Lower leg skin (tissue), 4 donors: ENCODE measurements at regions of chrX and their contacts with region 1.

Region 1: DNA sequence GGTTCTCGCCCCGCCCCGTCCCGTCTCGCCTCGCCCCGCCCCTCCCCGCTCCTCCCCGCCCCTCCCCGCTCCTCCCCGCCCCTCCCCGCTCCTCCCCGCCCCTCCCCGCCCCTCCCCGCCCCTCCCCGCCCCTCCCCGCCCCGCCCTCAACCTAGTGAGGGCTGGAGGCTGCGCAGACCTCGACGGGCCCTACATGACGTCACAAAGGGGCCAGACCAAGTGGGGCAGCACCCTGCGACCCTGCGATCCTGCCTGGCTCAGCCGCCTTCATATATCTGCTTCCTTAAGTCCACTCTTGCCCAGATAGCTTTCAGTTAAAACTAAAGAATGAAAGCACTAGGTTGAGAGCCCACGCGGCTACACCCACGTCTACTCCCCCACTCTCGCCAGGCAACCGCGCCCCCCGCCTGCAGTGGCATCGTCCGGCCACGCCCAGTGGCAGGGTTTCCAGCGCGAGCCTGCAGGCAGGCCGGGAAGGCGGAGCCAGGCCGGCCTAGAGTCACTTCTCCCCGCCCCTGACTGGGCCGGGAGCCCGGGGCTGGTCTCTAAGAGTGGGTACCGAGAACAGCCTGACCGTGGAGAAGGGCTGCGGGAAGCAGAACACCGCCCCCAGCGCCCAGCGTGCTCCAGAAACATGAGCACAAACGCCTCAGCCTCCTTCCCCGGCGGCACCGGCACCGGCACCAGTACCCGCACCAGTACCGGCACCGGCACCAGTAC is 1.5 kb upstream of the MAOA start:
- DNase-seq: peak; percentile 90 to 97
- H3K4me3 ChIP-seq: peak overlapping the region; percentile 45
- CTCF ChIP-seq: no peak
- POLR2A ChIP-seq: peak in 1 of 2 donors; percentile 16

Region 2: DNA sequence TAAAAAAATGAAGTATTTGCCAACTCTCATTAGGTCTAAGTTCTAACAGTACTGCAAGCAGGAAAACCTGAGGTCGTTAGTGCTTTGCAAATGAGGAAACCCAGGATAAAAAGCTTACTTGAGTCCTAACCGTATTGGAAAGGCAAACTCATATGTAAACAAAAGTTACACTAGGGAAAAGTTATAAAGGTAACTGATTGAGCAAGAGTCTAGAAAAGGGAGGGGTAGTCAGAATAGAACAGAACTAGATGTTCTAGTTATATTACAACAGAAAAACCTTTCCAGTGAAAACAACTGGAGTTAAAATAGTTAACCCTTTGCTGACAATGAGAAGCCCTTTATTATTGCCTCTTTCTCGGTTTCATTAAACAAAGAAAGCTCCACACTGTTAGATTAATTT is 64.9 kb before region 1 on chrX:
- intact Hi-C with region 1: loop called (anchors 10 kb)
- DNase-seq: no peak
- H3K4me3 ChIP-seq: no peak overlapping the region
- CTCF ChIP-seq: no peak
- POLR2A ChIP-seq: no peak

Region 3: DNA sequence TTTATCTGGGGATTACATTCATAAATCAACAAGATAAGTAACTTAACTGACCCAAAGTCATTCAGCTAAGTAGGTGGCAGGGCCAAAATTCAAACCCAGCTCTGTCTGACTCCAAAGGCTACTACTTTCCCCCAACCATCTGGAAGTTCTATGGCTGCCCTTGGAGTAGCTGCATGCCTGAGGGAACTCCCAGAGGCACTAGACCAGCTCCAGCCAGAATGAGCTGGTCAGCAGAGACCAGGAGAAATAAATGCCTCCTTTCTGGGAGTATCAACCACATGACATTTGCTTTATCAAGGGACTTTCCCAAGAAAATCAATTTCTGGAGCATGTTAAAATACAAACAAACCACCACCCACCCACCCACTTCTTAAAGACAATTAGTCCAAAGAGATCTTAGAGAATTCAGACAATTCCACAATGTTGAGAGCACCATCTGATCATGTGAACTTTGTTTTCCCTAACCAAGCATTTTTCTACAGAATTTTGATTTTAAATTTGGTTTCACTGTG is 508.4 kb after region 1 on chrX:
- intact Hi-C with region 1: no loop called
- DNase-seq: no peak
- H3K4me3 ChIP-seq: no peak overlapping the region
- CTCF ChIP-seq: no peak
- POLR2A ChIP-seq: no peak